Ovary (tissue), 10 donors: ENCODE measurements at regions of chr22 and their contacts with region 1.

Region 1: GRCh38 chr22:35840302-35840739 is 122.6 kb downstream of the APOL5 start:
- DNase-seq: peak; percentile 86 to 89 (median 87)
- H3K4me3 ChIP-seq: peak overlapping the region; percentile 49
- H3K27ac ChIP-seq: peak overlapping the region in 1 of 2 donors; percentile 76
- H3K4me1 ChIP-seq: peaks cover 4% of the 10 kb centered on the region
- H3K27me3 ChIP-seq: no peaks in the 10 kb centered on the region
- CTCF ChIP-seq: no peak
- EP300 ChIP-seq: no peak
- POLR2A ChIP-seq: peak; percentile 9

Region 2: DNA sequence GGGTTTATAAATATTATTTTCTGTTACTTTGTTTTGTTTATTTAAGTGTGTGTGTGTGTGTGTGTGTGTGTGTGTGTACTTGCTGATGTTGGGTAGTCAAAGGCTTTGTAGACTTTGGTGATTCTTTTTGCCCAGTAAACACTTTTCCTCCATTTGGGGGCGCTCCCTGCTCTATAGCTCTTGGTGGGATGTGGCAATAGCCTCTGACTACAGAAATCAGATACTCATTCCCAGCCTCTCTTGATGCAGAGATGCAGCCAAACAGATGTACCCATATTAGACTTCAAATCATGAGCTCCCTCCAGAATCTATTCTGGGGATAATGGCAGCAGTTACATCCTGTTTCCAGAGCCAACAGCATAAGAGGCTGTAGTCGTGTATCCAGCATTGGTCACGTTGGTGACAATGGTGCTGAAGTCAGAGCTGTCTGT is 156.0 kb before region 1 on chr22:
- intact Hi-C with region 1: no loop called
- DNase-seq: peak in 1 of 5 donors; percentile 32
- H3K4me3 ChIP-seq: no peak overlapping the region
- H3K27ac ChIP-seq: no peak overlapping the region
- H3K4me1 ChIP-seq: no peaks in the 10 kb centered on the region
- H3K27me3 ChIP-seq: no peaks in the 10 kb centered on the region
- CTCF ChIP-seq: no peak
- EP300 ChIP-seq: no peak
- POLR2A ChIP-seq: no peak

Region 3: DNA sequence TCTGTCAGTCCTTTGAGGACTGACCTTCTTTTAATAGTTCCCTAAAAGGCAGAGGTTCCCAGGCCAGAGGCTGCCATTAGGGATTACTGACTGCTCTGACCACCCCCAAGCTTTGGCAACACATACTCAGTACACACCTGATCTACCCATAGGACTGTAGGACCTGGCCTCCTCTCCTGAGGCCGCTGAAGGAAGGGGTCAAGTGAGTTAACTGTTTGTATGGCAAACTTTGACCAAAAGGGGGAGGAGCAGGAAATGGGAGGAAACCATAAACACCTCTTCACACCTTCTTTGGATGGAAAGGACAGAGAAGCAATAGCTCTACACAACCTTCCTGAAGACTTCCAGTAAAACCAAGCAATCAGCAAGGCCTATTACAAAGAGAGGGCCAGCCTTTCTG is 18.7 kb before region 1 on chr22:
- intact Hi-C with region 1: no loop called
- DNase-seq: no peak
- H3K4me3 ChIP-seq: no peak overlapping the region
- H3K27ac ChIP-seq: no peak overlapping the region
- H3K4me1 ChIP-seq: peaks cover 5% of the 10 kb centered on the region
- H3K27me3 ChIP-seq: no peaks in the 10 kb centered on the region
- CTCF ChIP-seq: no peak
- EP300 ChIP-seq: no peak
- POLR2A ChIP-seq: no peak

Region 4: DNA sequence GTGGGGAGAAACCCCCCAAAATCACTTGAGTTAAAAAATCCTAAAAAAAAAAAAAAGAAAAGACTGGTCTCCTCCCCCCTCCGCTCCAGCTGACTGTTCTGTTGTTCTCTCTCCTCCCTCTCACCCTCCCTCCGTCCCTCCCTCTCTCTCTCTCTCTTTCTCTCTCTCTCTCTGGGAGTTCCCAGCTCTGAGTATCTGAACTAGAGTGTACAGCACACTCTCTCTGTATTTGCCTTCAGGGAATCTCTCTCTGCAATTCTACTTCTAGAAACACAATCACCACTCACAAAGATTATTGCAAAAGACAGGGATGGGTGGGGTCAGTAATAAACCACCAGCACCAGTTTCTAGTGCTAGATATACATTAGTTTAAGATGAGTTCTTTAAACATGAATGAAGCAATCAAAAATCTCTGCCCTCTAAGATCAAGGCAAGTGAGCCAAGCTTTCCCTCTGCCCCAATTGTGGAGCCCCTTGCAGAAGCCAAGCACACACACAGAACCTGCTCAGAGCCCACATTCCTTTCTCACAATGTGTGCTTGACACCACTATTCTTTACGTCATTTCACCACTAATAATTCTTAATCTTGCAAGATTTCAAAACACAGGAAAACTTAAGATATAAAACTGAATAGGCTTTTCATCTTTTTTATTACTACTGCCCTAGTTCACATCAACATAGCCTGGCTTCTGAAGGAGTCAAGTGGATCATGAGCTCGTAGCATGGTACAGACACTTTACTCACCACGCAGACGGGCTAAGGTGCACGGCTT is 54.8 kb after region 1 on chr22:
- intact Hi-C with region 1: loop called in 2 of 4 experiments (anchors 10 kb)
- DNase-seq: peak in 2 of 5 donors; percentile 46 to 55
- H3K4me3 ChIP-seq: peak overlapping the region; percentile 25
- H3K27ac ChIP-seq: peak overlapping the region in 1 of 2 donors; percentile 14
- H3K4me1 ChIP-seq: peaks cover 18% of the 10 kb centered on the region
- H3K27me3 ChIP-seq: no peaks in the 10 kb centered on the region
- CTCF ChIP-seq: no peak
- EP300 ChIP-seq: no peak
- POLR2A ChIP-seq: no peak

Region 5: GRCh38 chr22:35900483-35901168 is 60.3 kb after region 1 on chr22:
- intact Hi-C with region 1: loop called in 2 of 4 experiments (anchors 10 kb)
- DNase-seq: no peak
- H3K4me3 ChIP-seq: no peak overlapping the region
- H3K27ac ChIP-seq: no peak overlapping the region
- H3K4me1 ChIP-seq: peaks cover 14% of the 10 kb centered on the region
- H3K27me3 ChIP-seq: no peaks in the 10 kb centered on the region
- CTCF ChIP-seq: no peak
- EP300 ChIP-seq: no peak
- POLR2A ChIP-seq: no peak